Calu3 (cell line): ENCODE measurements at regions of chr4 and their contacts with region 1.

Region 1: GRCh38 chr4:23455456-23456158 is 434.2 kb downstream of the PPARGC1A start:
- DNase-seq: peak; percentile 14
- H3K4me3 Mint-ChIP-seq: no peak overlapping the region
- H3K27ac Mint-ChIP-seq: no peak overlapping the region
- H3K4me1 Mint-ChIP-seq: no peaks in the 10 kb centered on the region
- H3K27me3 Mint-ChIP-seq: no peaks in the 10 kb centered on the region
- CTCF ChIP-seq: no peak

Region 2: GRCh38 chr4:23614284-23614892 is 158.8 kb after region 1 on chr4:
- CTCF ChIA-PET with region 1: interaction called, 5 read pairs
- intact Hi-C with region 1: loop called (anchors 5 kb)
- DNase-seq: peak; percentile 5
- H3K4me3 Mint-ChIP-seq: no peak overlapping the region
- H3K27ac Mint-ChIP-seq: no peak overlapping the region
- H3K4me1 Mint-ChIP-seq: no peaks in the 10 kb centered on the region
- H3K27me3 Mint-ChIP-seq: no peaks in the 10 kb centered on the region
- CTCF ChIP-seq: no peak

Region 3: GRCh38 chr4:23717528-23718248 is 262.1 kb after region 1 on chr4:
- CTCF ChIA-PET with region 1: no interaction called
- intact Hi-C with region 1: loop called (anchors 10 kb)
- DNase-seq: no peak
- H3K4me3 Mint-ChIP-seq: no peak overlapping the region
- H3K27ac Mint-ChIP-seq: no peak overlapping the region
- H3K4me1 Mint-ChIP-seq: no peaks in the 10 kb centered on the region
- H3K27me3 Mint-ChIP-seq: no peaks in the 10 kb centered on the region
- CTCF ChIP-seq: peak; percentile 33